GM13976 (cell line): ENCODE measurements at regions of chr2 and their contacts with region 1.

Region 1: DNA sequence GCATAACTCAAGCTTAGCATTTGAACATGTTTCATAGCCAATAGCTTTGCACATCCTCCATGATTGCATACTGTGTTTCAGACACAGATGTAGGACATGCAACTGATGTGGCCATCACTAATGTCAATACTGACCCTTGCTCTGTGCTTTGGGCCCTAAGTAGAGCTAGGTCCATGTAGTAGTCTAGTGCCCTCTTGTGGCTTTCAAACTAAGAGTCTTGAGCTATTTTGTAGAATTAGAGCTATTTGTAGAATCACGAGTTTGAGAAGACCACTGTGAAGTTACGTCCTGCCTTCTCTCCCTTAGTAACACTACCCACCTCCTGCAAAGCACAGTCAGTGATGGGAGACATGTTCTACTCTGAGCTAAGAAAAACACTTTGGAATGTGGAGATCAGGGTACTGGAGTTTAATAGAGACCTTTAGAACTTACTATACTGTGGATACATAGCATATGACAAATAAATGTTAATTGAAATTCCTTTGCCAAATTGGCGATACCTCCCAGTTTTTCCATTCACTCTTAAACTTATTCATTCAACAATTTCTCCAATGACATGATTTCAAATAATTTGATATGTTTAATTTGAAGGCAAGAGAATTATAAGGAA is 306.5 kb upstream of the TNP1 start:
- DNase-seq: no peak
- CTCF ChIP-seq: peak; percentile 38

Region 2: GRCh38 chr2:217713395-217714286 is 547.3 kb after region 1 on chr2:
- in situ Hi-C with region 1: loop called (anchors 25 kb)
- DNase-seq: peak; percentile 79
- CTCF ChIP-seq: peak; percentile 88

Region 3: GRCh38 chr2:217827430-217828201 is 661.3 kb after region 1 on chr2:
- in situ Hi-C with region 1: no loop called
- DNase-seq: no peak
- CTCF ChIP-seq: no peak